ENCODE measurements at regions of chr9 and their contacts with region 1.

Region 1: DNA sequence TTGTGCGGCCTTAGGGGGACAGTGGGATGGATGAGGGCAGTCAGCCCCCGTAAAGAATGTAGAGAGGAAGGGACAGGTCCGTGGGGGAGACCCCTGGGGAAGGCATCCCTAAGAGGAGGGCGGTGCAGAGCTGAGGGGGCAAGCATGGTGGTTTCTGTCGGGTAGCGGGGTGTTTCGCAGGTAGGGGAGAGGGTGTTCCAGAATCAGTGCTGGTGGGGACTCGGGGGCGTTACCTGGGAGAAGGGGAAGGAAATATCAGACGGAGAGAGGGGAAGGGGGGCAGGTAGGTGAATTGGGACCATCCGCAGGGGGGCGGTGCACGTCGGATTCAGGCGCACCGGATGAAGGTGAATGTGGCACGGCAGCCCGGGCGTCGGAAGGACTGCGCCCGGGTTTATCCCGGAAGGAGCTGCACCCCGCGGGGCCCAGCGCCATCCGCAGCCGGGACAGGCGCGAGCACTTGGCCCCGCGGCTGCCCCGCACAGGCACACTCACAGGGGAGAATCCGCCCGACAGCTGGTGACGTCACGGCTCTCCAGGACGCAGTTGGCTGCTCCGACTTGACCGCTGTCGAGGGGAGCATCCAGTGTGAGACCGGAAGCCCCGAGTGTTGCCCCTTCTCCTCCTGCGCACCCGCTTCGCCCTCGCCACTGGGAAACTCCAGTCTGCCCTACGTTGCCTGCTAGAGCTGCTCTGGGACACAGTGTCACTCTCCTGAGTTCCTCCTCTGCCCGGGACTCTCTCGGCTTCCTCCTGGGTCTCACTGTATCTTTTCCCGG is 1.3 kb downstream of the CD72 start:
- DNase-seq: peak; percentile 74
- H3K4me3 Mint-ChIP-seq: peak overlapping the region; percentile 73
- H3K27ac Mint-ChIP-seq: peak overlapping the region; percentile 42
- H3K4me1 Mint-ChIP-seq: peaks cover 43% of the 10 kb centered on the region
- H3K27me3 Mint-ChIP-seq: peaks cover 3% of the 10 kb centered on the region

Region 2: DNA sequence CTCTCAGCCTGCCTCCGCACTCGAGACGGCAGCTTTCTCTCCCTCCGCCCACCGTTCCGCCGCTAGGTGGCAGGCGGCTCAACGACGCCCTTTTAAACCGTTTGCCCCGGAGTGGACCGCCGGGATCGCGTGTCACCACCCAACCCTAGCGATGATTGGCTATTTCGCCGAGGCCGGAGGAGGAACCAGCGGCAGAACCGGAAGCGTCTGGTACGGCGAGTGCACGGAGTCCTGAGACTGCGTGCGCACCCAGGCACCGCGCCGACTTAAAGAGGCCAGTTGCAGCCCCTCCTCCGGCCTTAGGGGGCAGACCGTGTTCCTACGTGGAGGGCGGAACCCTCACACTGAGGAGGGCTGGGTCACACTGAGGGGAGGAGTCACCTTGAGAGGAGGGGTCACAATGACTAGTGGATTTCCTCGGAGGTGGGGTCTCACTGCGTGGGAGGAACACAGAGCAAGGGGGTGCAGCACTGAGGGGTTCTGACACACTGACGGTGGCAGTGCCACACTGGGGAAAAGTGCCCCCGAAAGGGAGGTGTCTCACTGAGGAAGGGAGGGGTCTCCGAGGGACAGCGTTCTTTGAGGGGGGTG is 12.8 kb before region 1 on chr9:
- CTCF ChIA-PET with region 1: interaction called, 19 read pairs
- POLR2A ChIA-PET with region 1: interaction called, 19 read pairs
- DNase-seq: peak; percentile 100
- H3K4me3 Mint-ChIP-seq: peak overlapping the region; percentile 96
- H3K27ac Mint-ChIP-seq: peak overlapping the region; percentile 99
- H3K4me1 Mint-ChIP-seq: peaks cover 30% of the 10 kb centered on the region
- H3K27me3 Mint-ChIP-seq: no peaks in the 10 kb centered on the region

Region 3: DNA sequence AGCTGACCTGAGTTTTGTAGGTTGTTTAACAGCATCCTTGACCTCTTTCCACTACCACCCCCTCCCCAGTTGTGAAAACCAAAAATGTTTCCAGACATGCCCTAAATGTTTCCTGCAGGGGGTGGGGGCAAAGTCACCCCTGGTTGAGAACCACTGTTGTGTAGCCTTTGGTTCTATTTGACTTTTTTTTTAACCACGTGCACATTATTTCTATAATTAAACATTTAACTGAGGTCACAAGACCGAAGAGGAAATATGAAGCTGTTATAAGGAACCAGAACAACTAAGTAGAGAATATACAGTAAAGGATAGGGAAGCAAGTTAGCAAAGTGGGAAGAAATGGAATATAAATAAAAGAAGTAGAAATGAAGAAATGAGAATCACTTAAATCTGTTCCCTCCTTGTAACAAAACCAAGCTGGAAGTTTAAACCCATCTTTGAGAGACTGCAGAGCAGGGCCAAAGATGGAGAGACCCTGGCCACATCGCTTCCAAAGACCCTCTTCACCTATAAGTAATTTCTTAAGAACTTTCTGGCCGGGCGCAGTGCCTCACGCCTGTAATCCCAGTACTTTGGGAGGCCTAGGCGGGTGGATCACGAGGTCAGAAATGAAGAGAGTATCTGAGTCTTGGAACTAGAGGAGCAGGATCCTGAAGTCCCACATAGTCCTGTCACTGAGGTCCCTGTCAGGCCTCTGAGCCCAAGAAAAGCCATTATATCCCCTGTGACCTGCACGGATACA is 19.4 kb after region 1 on chr9:
- CTCF ChIA-PET with region 1: interaction called, 40 read pairs
- POLR2A ChIA-PET with region 1: interaction called, 6 read pairs
- DNase-seq: no peak
- H3K4me3 Mint-ChIP-seq: no peak overlapping the region
- H3K27ac Mint-ChIP-seq: no peak overlapping the region
- H3K4me1 Mint-ChIP-seq: peaks cover 35% of the 10 kb centered on the region
- H3K27me3 Mint-ChIP-seq: no peaks in the 10 kb centered on the region